Left colon (tissue), 2 donors: ENCODE measurements at regions of chr2 and their contacts with region 1.

Region 1: GRCh38 chr2:147937744-147938349 is 82.7 kb downstream of the ORC4 start:
- DNase-seq: no peak
- ATAC-seq: peak; percentile 73

Region 2: DNA sequence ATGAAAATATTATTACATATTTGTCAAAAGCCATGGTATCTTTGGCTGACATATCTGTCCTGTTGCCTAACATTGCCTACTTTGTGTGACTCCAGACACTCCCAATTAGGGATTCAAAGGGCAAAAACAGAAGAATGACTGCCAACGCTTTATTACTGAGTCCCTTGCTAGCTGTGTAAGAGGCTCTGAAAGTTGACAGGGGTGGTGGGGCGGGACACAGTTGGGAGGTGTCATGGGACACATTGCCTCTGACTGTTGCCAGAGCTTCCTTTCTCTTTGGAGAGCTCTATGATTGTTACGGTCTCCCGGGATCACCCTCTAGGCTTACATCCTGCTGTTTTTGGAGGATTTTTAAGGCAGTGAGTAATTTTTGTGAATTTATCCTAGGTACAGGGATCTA is 342.6 kb before region 1 on chr2:
- intact Hi-C with region 1: no loop called
- DNase-seq: peak; percentile 48 to 61
- ATAC-seq: peak; percentile 94

Region 3: DNA sequence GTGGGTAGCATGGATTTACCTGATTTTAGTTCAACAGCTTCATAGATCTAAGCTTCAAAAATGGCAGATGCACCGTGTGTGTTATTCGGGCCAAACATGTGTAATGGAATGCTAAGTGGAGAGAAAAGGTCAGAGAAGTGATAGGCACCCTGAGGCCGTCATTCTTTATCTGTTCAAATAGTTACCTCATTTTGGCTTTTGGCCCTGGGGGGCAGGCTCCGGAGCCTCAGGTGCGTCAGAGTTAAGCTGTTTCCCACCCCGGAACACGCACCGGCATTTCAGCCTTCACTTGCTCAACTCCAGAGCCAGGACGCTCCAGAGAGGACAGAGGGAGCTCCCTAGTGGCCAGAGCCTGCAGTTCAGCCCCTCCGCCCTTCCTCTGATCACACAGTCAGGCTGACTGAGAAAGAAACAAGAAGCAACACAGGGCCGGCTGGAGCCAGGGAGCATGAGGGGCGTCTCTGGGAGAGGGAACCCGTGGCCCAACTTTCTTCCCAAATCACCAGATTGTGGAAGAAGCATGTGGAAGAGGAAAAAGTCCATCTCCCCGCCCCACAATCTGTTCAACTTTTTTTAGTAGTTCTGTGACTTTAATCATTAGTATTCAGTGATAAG is 571.5 kb after region 1 on chr2:
- intact Hi-C with region 1: loop called in 1 of 2 experiments (anchors 5 kb)
- DNase-seq: peak; percentile 71 to 87
- ATAC-seq: peak; percentile 100

Region 4: DNA sequence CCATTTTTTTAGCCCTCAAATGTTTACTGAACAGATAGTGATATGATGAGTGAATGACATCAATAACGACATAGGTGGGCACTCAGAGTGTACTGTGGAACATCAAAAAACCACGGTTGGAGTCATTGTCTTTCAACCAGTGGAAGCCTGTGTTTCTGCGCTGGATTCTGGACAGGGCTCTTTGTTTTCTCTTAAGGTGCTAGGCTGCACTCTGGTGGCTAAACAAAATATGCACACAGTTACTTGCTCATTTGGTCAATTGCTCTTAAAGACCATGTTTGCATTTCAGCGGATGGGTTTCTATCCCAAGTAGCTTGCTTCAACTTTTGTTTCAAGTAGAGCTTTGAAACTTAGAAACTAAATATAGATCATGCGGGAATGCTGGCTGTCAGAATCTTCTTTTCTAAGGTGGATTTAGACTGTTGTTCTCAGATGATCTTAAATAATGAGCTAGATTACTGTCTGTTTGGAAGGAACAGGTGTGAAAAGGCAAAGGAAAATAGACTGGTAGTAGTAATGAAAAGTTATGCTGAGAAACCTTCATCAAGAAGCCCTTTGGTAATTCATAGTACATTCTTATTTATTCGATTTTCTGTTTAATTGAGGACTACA is 1052.1 kb after region 1 on chr2:
- intact Hi-C with region 1: loop called in 1 of 2 experiments (anchors 5 kb)
- DNase-seq: peak; percentile 47 to 48
- ATAC-seq: peak; percentile 90